Caco-2 (cell line): ENCODE measurements at regions of chr17 and their contacts with region 1.

Region 1: GRCh38 chr17:37527249-37527851 is 37.7 kb downstream of the DUSP14 start:
- DNase-seq: peak; percentile 52 to 70
- H3K4me3 ChIP-seq: no peak overlapping the region
- H3K4me3 Mint-ChIP-seq: no peak overlapping the region
- H3K27ac Mint-ChIP-seq: no peak overlapping the region
- H3K4me1 ChIP-seq: no peaks in the 10 kb centered on the region
- H3K4me1 Mint-ChIP-seq: no peaks in the 10 kb centered on the region
- H3K27me3 ChIP-seq: no peaks in the 10 kb centered on the region
- H3K27me3 Mint-ChIP-seq: no peaks in the 10 kb centered on the region
- CTCF ChIP-seq: peak; percentile 81 to 87

Region 2: DNA sequence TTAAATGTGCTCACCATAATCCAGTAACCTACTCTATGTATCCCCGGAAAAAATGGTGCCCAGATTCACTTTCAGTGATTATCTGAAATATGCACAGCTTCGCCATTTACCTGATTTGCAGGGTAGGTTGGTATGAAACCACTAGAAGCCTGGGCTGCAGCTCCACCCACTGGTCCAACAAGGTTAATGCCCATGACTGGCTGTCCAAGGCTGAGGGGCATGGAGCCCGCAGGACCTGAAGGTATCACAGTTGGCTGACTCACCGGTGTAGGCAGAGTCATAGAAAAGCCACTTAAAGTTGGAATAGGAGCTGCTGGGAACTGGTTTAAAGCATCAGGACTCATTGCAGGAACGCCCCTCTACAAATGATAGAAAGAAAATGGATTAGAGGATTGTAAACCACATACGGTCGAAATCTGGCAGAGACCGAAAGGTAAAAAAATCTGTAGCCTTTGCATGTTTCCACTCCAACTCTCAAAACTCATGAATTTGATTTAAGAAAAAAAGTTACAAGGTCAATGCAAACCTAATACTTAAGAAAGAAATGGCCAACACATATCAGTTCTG is 43.3 kb after region 1 on chr17:
- CTCF ChIA-PET with region 1: interaction called, 25 read pairs
- POLR2A ChIA-PET with region 1: no interaction called
- intact Hi-C with region 1: loop called (anchors 1 kb)
- DNase-seq: peak; percentile 71 to 72
- H3K4me3 ChIP-seq: no peak overlapping the region
- H3K4me3 Mint-ChIP-seq: no peak overlapping the region
- H3K27ac Mint-ChIP-seq: no peak overlapping the region
- H3K4me1 ChIP-seq: no peaks in the 10 kb centered on the region
- H3K4me1 Mint-ChIP-seq: no peaks in the 10 kb centered on the region
- H3K27me3 ChIP-seq: no peaks in the 10 kb centered on the region
- H3K27me3 Mint-ChIP-seq: no peaks in the 10 kb centered on the region
- CTCF ChIP-seq: peak; percentile 40 to 72

Region 3: DNA sequence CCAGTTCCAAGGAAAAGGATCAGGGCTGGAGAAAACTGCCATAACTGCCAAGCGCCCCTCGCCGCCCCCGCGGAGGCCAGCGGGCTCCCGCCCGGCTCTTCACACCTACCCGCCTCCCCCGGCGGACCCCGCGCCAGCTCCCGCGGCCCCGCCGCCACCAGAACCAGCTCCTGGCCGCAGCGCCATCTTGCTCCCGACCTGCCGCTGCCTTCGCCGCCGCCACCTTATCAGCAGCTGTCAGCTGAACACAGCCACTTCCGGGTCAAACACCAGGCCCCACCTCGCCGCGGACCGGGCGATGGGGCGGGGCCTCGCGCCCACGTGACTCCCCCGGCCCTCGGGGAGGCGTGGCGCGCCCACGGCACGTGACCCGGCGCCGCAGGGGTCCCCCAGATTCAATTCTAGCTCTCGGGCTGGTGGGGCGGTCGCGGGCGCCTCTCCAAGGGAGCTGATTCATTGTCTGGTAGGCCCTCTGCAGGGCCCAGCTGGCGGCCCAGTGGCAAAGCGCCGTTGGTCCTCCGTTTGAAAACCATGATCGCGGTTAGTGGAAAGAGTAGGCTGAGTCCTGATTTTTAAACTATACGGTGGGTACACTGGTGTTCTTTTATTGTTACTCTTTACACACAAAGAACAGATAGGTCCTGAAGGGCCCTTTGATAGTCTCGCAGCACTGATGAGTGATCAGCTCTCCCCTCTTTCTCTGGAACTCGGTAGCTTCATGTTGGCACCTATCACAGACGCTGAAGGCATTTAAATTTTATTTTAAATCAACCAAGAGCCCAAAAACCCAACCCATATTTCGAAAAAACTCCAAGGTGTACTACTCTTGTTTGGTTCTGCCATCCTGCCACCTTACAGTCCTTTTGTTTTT is 82.1 kb after region 1 on chr17 and contains the start of gene SYNRG:
- CTCF ChIA-PET with region 1: interaction called, 11 read pairs
- POLR2A ChIA-PET with region 1: no interaction called
- intact Hi-C with region 1: no loop called
- DNase-seq: peak; percentile 97 to 99
- H3K4me3 ChIP-seq: peak within 1 kb of the TSS; percentile 65
- H3K4me3 Mint-ChIP-seq: peak within 1 kb of the TSS; percentile 86
- H3K27ac Mint-ChIP-seq: peak within 1 kb of the TSS; percentile 90
- H3K4me1 ChIP-seq: 0 out of 2 replicates have a peak, but pooled peaks cover 3% of the 10 kb centered on the region
- H3K4me1 Mint-ChIP-seq: no peaks in the 10 kb centered on the region
- H3K27me3 ChIP-seq: no peaks in the 10 kb centered on the region
- H3K27me3 Mint-ChIP-seq: no peaks in the 10 kb centered on the region
- CTCF ChIP-seq: peak; percentile 63 to 64
- total RNA-seq, gene SYNRG: 36.6 and 40.5 TPM in 2 replicates